ENCODE measurements at regions of chr11 and their contacts with region 1.

Region 1: GRCh38 chr11:75406338-75406777 is 7.0 kb downstream of the RPS3 start:
- DNase-seq: no peak
- H3K4me3 ChIP-seq: no peak overlapping the region
- H3K4me3 Mint-ChIP-seq: no peak overlapping the region
- H3K27ac ChIP-seq: no peak overlapping the region
- H3K27ac Mint-ChIP-seq: peak overlapping the region in 6 of 8 donors; percentile 15 to 40 (median 30)
- H3K4me1 ChIP-seq: peaks cover 20% of the 10 kb centered on the region
- H3K4me1 Mint-ChIP-seq: peaks cover 43 to 60% (median 46%) of the 10 kb centered on the region in 3 donors
- H3K27me3 ChIP-seq: no peaks in the 10 kb centered on the region
- H3K27me3 Mint-ChIP-seq: no peaks in the 10 kb centered on the region

Region 2: GRCh38 chr11:75376175-75376574 is 30.2 kb before region 1 on chr11:
- CTCF ChIA-PET with region 1: no interaction called
- POLR2A ChIA-PET with region 1: no interaction called
- DNase-seq: no peak
- H3K4me3 ChIP-seq: no peak overlapping the region
- H3K4me3 Mint-ChIP-seq: peak overlapping the region in 1 of 7 donors; percentile 40
- H3K27ac ChIP-seq: no peak overlapping the region
- H3K27ac Mint-ChIP-seq: no peak overlapping the region
- H3K4me1 ChIP-seq: no peaks in the 10 kb centered on the region
- H3K4me1 Mint-ChIP-seq: peaks cover 0 to 3% (median 0%) of the 10 kb centered on the region in 3 donors
- H3K27me3 ChIP-seq: no peaks in the 10 kb centered on the region
- H3K27me3 Mint-ChIP-seq: peaks cover 2 to 4% of the 10 kb centered on the region in 2 donors

Region 3: DNA sequence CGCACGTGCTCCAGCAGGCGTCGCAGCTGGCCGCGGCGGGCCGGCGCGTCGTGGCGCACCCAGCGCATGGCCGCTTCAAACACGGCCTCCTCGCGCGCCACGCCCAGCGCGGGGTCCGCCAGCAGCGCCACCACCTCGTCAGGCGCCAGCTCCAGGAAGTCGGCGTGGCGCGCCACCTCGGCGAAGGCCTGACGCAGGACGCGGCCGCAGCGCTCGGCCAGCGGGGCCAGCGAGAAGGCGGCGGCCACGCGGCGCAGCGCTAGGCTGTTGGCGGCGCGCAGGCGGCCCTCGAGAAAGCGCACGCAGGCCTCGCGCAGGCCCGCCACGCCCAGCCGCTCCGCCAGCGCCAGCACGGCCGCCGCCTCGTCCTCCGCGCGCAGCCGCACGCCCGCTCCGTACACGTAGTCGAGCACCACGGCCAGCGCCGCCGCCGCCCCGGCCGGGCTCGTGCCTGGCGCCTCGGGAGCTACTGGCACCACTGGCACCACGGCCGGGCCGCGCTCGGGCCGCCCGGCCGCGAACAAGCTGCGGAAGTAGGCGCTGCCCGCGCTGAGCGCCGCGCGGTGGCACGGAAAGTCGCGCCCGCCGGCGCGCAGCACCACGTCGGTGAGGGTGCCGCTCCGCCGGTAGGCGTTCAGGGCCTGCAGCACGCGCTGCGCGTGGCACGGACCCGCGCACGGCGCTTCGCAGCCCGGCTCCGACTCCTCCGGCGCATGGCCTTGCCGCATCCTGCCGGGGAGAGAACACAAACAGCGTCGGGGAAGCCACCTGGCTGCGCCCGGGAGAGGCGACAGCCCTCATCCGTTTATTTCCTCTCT is 23.8 kb after region 1 on chr11:
- CTCF ChIA-PET with region 1: interaction called, 12 read pairs
- POLR2A ChIA-PET with region 1: no interaction called
- DNase-seq: peak; percentile 39 to 70 (median 68)
- H3K4me3 ChIP-seq: peak overlapping the region; percentile 54
- H3K4me3 Mint-ChIP-seq: peak overlapping the region; percentile 79 to 92 (median 83)
- H3K27ac ChIP-seq: no peak overlapping the region
- H3K27ac Mint-ChIP-seq: peak overlapping the region in 4 of 8 donors; percentile 39 to 85 (median 76)
- H3K4me1 ChIP-seq: peaks cover 5% of the 10 kb centered on the region
- H3K4me1 Mint-ChIP-seq: peaks cover 18 to 27% (median 23%) of the 10 kb centered on the region in 3 donors
- H3K27me3 ChIP-seq: peaks cover 13% of the 10 kb centered on the region
- H3K27me3 Mint-ChIP-seq: peaks cover 27 to 44% of the 10 kb centered on the region in 2 donors